ENCODE measurements at regions of chrX and their contacts with region 1.

Region 1: DNA sequence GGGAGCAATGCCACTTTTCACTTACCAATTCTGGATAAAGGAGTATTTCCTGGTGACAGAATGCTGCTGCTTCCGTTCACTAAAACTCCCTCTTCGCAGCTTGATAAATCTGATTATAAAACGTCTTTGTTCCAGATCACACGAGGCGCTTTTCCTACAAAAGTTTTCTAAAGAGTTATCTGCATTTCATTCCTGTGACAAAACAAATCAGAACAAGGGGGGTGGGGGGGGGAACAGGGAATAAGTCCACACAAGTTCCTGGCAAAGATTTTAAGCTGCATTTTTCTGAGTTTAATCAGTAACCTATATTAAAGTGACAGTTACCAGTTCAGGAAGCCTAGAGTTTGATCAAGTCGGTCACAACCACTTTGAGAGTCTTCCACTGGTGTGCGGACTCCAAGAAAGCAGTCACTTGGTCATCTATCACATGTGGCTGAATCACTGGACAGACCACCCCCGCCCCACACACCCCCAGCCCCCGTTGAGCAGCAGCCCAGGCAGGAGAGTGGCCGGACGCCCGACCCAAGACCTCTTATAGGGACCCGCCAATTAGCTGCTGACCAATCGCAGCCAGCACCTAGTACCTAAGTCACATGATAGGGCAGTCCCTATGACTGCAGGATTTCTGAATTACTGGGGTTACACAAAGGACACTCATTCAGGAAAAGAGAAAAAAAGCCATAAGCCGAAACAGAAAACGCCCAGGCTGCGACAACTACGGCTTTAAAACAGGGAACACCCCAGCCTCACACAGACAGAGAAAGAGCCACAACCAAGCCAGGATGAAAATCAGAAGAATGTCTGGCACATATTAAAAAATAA is 569.3 kb upstream of the DIPK2B start:
- DNase-seq: peak; percentile 71
- H3K4me3 ChIP-seq: peak overlapping the region; percentile 62
- H3K27ac ChIP-seq: peak overlapping the region; percentile 81
- H3K27me3 ChIP-seq: no peaks in the 10 kb centered on the region
- CTCF ChIP-seq: no peak

Region 2: GRCh38 chrX:45801554-45801953 is 31.6 kb after region 1 on chrX:
- CTCF ChIA-PET with region 1: interaction called, 4 read pairs
- POLR2A ChIA-PET with region 1: interaction called, 36 read pairs
- DNase-seq: no peak
- H3K4me3 ChIP-seq: no peak overlapping the region
- H3K27ac ChIP-seq: no peak overlapping the region
- H3K27me3 ChIP-seq: no peaks in the 10 kb centered on the region
- CTCF ChIP-seq: no peak

Region 3: GRCh38 chrX:45806410-45807121 is 36.6 kb after region 1 on chrX:
- CTCF ChIA-PET with region 1: interaction called, 4 read pairs
- POLR2A ChIA-PET with region 1: interaction called, 36 read pairs
- DNase-seq: no peak
- H3K4me3 ChIP-seq: peak overlapping the region; percentile 50
- H3K27ac ChIP-seq: peak overlapping the region; percentile 88
- H3K27me3 ChIP-seq: no peaks in the 10 kb centered on the region
- CTCF ChIP-seq: no peak

Region 4: DNA sequence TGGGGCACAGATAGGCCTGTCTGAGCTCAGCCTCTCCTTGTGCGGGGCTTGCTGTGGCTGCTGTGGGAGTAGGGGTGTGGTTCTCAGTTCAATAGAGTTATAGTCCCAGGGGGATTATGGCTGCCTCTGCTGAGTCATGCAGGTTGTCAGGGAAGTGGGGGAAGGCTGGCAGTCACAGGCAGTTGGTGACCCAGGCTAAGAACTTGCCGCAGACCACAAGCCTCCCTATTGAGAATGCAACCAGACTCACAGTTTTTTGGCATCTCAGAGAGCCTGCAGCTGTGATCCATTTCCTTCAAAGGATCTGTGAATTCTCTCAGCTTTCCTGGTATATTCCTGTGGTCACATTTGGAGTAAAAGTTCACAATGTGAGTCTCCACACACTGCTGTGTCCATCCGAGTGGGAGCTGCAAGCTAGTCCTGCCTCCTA is 410.3 kb after region 1 on chrX:
- CTCF ChIA-PET with region 1: no interaction called
- POLR2A ChIA-PET with region 1: no interaction called
- DNase-seq: no peak
- H3K4me3 ChIP-seq: no peak overlapping the region
- H3K27ac ChIP-seq: no peak overlapping the region
- H3K27me3 ChIP-seq: no peaks in the 10 kb centered on the region
- CTCF ChIP-seq: no peak